Caco-2 (cell line): ENCODE measurements at regions of chr5 and their contacts with region 1.

Region 1: DNA sequence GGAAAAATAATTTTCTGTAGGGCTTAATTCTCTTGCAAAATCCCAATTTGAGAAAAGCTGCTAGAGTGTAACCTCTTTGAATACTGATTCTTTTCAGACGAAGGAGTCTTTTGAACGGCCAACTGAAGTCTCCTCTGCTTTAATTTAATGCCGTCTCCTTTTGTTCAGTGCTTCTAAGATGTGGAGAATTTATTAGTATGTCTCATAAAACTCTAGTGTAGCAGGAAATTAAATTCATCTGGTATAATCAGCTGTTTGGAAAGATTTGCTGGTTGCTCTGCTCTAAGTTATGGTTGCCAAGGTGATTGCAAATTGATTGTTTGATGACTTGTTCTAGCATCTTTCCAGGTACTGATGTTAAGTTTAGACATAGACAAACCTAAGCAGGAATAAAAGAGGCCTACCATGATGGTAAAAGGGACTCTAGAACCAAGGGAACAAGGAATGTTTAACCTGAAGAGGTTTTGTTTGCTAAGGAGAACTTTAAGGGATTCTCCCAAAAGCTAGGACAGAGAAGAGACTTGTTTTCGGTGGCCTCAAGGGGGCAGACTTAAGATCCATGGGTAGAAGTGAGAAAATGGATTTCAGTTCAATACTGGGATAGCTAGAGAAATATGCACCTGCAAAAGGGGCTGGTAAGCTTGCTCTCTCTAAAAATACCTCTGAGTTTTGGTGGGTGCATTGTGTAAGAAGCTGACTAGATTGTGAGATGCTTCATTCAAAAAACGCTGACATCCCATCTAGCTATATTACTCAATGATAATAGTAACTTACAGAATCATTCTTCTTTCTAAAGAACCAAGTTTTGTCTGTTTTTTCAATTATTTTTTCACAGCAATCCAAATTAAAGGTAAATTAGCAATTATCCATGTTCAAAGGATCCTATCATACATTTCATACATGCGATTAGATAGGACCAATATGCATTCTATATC is 5.7 kb upstream of the ADRB2 start:
- DNase-seq: peak in 1 of 2 experiments; percentile 37
- H3K4me3 ChIP-seq: no peak overlapping the region
- H3K4me3 Mint-ChIP-seq: no peak overlapping the region
- H3K27ac Mint-ChIP-seq: no peak overlapping the region
- H3K4me1 ChIP-seq: peaks cover 2% of the 10 kb centered on the region; the same call in 1 of the 2 replicates
- H3K4me1 Mint-ChIP-seq: peaks cover 4% of the 10 kb centered on the region
- H3K27me3 ChIP-seq: peaks cover 2% of the 10 kb centered on the region; the same call in 1 of the 2 replicates
- H3K27me3 Mint-ChIP-seq: peaks cover 27% of the 10 kb centered on the region
- CTCF ChIP-seq: peak; percentile 69 to 71

Region 2: GRCh38 chr5:148740966-148741742 is 79.6 kb before region 1 on chr5:
- CTCF ChIA-PET with region 1: interaction called, 5 read pairs
- POLR2A ChIA-PET with region 1: no interaction called
- intact Hi-C with region 1: loop called (anchors 2 kb)
- DNase-seq: peak in 1 of 2 experiments; percentile 45
- H3K4me3 ChIP-seq: no peak overlapping the region
- H3K4me3 Mint-ChIP-seq: no peak overlapping the region
- H3K27ac Mint-ChIP-seq: no peak overlapping the region
- H3K4me1 ChIP-seq: no peaks in the 10 kb centered on the region
- H3K4me1 Mint-ChIP-seq: no peaks in the 10 kb centered on the region
- H3K27me3 ChIP-seq: no peaks in the 10 kb centered on the region
- H3K27me3 Mint-ChIP-seq: peaks cover 11% of the 10 kb centered on the region
- CTCF ChIP-seq: peak; percentile 64 to 67